BJ (cell line): ENCODE measurements at regions of chr10 and their contacts with region 1.

Region 1: DNA sequence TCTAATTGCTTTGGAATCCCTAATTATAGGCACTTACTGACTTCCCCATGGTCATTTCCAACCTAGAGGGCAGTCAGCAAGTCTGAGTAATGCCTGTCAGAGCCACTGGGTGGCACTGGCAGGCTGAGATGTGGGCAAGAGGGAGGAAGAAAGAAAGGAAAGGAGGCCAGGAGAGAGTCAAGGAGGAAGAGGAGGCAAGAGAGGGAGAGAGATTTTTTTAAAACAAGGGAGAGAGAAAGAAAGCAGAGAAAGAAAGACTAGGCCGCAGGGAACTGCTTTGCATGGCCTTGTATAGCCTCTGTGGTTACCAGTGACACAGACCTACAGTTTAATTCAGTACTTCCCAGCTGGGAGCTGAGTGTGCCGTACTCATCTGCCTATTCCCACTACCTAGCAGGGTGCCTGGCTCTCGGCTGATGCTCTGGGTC is 210.4 kb upstream of the ADO start:
- DNase-seq: no peak
- H3K4me3 ChIP-seq: no peak overlapping the region
- H3K27me3 ChIP-seq: no peaks in the 10 kb centered on the region
- CTCF ChIP-seq: peak; percentile 94

Region 2: DNA sequence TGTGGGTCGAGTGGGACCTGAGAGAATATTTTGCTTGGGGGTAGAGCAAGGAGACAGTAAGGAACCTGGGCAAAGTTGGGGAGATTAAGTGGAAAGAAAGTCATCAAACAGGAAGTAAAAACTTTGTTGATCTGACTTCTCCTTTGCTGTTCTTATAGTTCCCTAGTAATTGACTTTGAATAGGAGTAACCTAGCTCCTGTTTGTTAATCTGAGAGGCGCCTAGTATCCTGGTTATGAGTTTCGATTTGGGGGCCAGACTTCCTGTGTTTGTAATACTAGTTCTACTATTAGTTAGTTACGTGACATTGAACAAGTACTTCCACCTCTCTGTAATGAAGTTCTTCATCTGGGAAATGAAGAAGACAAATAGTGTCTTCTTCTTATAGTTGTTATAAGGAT is 120.9 kb before region 1 on chr10:
- CTCF ChIA-PET with region 1: no interaction called
- POLR2A ChIA-PET with region 1: no interaction called
- DNase-seq: no peak
- H3K4me3 ChIP-seq: no peak overlapping the region
- H3K27me3 ChIP-seq: no peaks in the 10 kb centered on the region
- CTCF ChIP-seq: no peak

Region 3: DNA sequence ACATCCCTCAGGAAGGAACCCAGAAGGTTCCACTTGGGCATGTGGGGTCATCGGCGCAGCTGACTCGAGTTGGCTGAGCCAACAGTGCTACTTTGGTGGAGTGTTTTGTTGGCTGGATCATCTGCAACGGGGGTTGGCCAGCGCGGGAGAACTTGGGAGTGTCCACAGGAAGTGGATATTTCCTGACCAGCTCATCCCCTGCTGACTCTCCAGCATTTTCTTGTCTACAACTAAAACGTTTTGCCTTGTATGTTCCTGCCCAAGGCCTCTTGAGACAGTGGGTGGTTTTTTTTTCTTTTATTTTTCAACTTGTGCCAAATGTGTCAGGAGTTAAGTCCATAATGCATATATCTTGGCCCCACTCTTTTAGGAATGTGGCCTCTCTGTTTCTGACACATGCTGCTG is 11.3 kb before region 1 on chr10:
- CTCF ChIA-PET with region 1: interaction called, 25 read pairs
- POLR2A ChIA-PET with region 1: no interaction called
- DNase-seq: peak; percentile 98
- H3K4me3 ChIP-seq: no peak overlapping the region
- H3K27me3 ChIP-seq: no peaks in the 10 kb centered on the region
- CTCF ChIP-seq: no peak

Region 4: GRCh38 chr10:62816331-62817120 is 222.4 kb after region 1 on chr10 and contains the start of gene EGR2:
- CTCF ChIA-PET with region 1: interaction called, 41 read pairs
- POLR2A ChIA-PET with region 1: no interaction called
- DNase-seq: peak; percentile 66
- H3K4me3 ChIP-seq: peak within 1 kb of the TSS; percentile 59
- H3K27me3 ChIP-seq: peaks cover 20% of the 10 kb centered on the region
- CTCF ChIP-seq: no peak
- polyA plus RNA-seq, gene EGR2: 1.1 and 1.9 TPM in 2 replicates

Region 5: GRCh38 chr10:63083904-63084689 is 490.0 kb after region 1 on chr10:
- CTCF ChIA-PET with region 1: interaction called, 23 read pairs
- POLR2A ChIA-PET with region 1: no interaction called
- DNase-seq: peak; percentile 34
- H3K4me3 ChIP-seq: no peak overlapping the region
- H3K27me3 ChIP-seq: no peaks in the 10 kb centered on the region
- CTCF ChIP-seq: peak; percentile 64